H1 (cell line): ENCODE measurements at regions of chr4 and their contacts with region 1.

Region 1: GRCh38 chr4:157514711-157515110 is 294.2 kb downstream of the GRIA2 start:
- DNase-seq: peak; percentile 39 to 70
- H3K4me3 ChIP-seq: no peak overlapping the region
- H3K27ac ChIP-seq: no peak overlapping the region
- H3K4me1 ChIP-seq: no peaks in the 10 kb centered on the region
- H3K27me3 ChIP-seq: no peaks in the 10 kb centered on the region
- CTCF ChIP-seq: peak; percentile 79 to 80 (median 79)
- EP300 ChIP-seq: no peak
- POLR2A ChIP-seq: no peak
- RAD21 ChIP-seq: peak; percentile 86 to 88

Region 2: DNA sequence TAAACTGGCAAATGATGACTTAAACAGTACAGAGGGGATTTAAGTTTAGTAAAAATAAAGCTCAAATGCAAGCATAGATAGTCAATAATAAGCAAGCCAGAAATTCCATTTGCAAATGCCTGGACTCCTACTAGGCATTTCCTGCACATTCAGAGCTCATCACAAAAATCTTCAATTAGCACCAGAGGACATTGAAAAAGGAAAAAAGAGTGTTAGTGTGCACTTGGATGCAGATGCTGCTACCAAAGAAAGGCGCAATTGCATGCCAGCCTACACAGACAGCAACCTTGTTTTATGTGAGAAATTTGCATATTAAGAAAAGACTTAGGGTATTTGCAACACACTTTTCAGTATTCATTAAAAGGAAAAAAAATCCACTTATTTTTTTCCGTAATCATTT is 12.1 kb before region 1 on chr4:
- CTCF ChIA-PET with region 1: interaction called, 26 read pairs
- POLR2A ChIA-PET with region 1: no interaction called
- DNase-seq: no peak
- H3K4me3 ChIP-seq: no peak overlapping the region
- H3K27ac ChIP-seq: no peak overlapping the region
- H3K4me1 ChIP-seq: no peaks in the 10 kb centered on the region
- H3K27me3 ChIP-seq: no peaks in the 10 kb centered on the region
- CTCF ChIP-seq: no peak
- EP300 ChIP-seq: no peak
- POLR2A ChIP-seq: no peak
- RAD21 ChIP-seq: no peak

Region 3: GRCh38 chr4:157527954-157528353 is 13.2 kb after region 1 on chr4:
- CTCF ChIA-PET with region 1: interaction called, 17 read pairs
- POLR2A ChIA-PET with region 1: no interaction called
- DNase-seq: no peak
- H3K4me3 ChIP-seq: no peak overlapping the region
- H3K27ac ChIP-seq: no peak overlapping the region
- H3K4me1 ChIP-seq: no peaks in the 10 kb centered on the region
- H3K27me3 ChIP-seq: no peaks in the 10 kb centered on the region
- CTCF ChIP-seq: no peak
- EP300 ChIP-seq: no peak
- POLR2A ChIP-seq: no peak
- RAD21 ChIP-seq: no peak

Region 4: DNA sequence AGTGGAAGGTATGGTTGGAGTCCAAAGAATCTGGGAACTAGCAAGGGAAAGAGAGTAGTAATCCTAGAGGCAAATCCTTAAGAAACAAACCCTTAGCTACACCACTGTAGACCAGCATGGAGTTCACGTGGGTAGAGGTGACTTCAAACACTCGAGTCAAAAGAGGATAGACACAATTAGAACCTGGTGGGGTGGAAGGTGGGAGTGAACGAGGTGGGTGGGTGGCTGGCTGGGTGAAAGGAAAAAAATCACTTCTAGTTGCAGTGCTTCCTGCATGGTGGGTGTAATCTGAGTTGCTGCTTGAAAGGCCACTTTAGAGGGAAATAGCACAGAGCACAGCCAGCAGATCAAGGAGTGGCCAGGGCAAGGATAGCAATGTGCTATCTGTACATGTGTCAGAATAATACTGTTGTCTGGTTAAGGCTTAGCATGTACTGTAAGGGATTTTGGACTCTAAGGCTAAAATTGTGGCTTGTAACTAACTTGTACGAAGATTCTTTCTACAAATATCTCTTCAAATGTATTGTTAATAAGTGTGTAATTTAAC is 62.0 kb after region 1 on chr4:
- CTCF ChIA-PET with region 1: no interaction called
- POLR2A ChIA-PET with region 1: no interaction called
- DNase-seq: no peak
- H3K4me3 ChIP-seq: no peak overlapping the region
- H3K27ac ChIP-seq: no peak overlapping the region
- H3K4me1 ChIP-seq: no peaks in the 10 kb centered on the region
- H3K27me3 ChIP-seq: no peaks in the 10 kb centered on the region
- CTCF ChIP-seq: no peak
- EP300 ChIP-seq: no peak
- POLR2A ChIP-seq: no peak
- RAD21 ChIP-seq: no peak

Region 5: DNA sequence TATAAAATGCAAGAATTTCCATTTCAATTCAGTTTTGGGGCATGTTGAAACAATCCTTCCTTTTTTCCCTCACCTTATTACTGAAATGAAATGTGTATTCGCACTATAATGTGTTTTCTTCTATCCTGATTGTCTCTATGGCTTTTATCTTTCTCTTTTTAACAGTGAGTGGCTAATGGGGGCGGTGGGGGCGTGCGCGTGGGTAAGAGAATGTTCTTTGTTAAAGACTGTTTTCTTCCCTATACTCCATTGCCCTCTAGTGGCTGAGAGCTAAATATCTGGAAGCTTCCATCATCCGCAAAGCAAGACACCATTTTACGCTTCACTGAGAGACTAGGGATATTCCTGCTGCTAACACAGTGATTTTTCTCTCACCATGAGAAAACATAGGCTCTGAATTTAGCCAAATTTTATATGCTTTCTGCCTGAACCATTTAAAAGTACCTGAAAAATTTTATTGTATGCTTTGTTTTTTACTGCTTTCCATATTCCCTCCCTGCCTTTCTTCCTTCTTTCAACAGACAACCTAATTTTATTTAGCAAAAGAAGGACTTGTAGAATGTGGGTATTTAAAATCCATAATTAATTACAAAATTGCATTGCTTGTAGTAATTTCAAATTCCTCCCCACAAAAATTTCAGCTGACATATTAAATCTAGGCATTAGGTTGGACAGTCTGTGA is 464.1 kb after region 1 on chr4:
- CTCF ChIA-PET with region 1: interaction called, 30 read pairs
- POLR2A ChIA-PET with region 1: no interaction called
- DNase-seq: peak; percentile 23 to 55
- H3K4me3 ChIP-seq: no peak overlapping the region; a peak in 1 of 8 replicates
- H3K27ac ChIP-seq: no peak overlapping the region
- H3K4me1 ChIP-seq: no peaks in the 10 kb centered on the region; a peak in 1 of 7 replicates
- H3K27me3 ChIP-seq: no peaks in the 10 kb centered on the region
- CTCF ChIP-seq: peak in 2 of 3 experiments; percentile 68 to 75; a peak in 3 of 4 replicates
- EP300 ChIP-seq: no peak
- POLR2A ChIP-seq: no peak
- RAD21 ChIP-seq: peak; percentile 91 to 92